Common myeloid progenitor, CD34-positive (primary cell): ENCODE measurements at regions of chr10 and their contacts with region 1.

Region 1: GRCh38 chr10:70461215-70461986 is 17.2 kb upstream of the PALD1 start:
- DNase-seq: peak in 2 of 3 donors; percentile 38 to 49
- H3K4me3 ChIP-seq: no peak overlapping the region
- H3K27ac ChIP-seq: no peak overlapping the region
- H3K4me1 ChIP-seq: peaks cover 0 to 22% (median 13%) of the 10 kb centered on the region in 4 experiments
- H3K27me3 ChIP-seq: peaks cover 2 to 44% (median 20%) of the 10 kb centered on the region in 5 experiments

Region 2: GRCh38 chr10:70255329-70256299 is 205.8 kb before region 1 on chr10:
- CTCF ChIA-PET with region 1: no interaction called
- POLR2A ChIA-PET with region 1: no interaction called
- DNase-seq: peak in 2 of 3 donors; percentile 38 to 47
- H3K4me3 ChIP-seq: peak overlapping the region in 3 of 7 experiments; percentile 28 to 51 (median 43)
- H3K27ac ChIP-seq: no peak overlapping the region
- H3K4me1 ChIP-seq: peaks cover 0 to 14% (median 11%) of the 10 kb centered on the region in 4 experiments
- H3K27me3 ChIP-seq: peaks cover 3 to 68% (median 40%) of the 10 kb centered on the region in 5 experiments

Region 3: GRCh38 chr10:70381471-70382421 is 79.7 kb before region 1 on chr10:
- CTCF ChIA-PET with region 1: no interaction called
- POLR2A ChIA-PET with region 1: no interaction called
- DNase-seq: no peak
- H3K4me3 ChIP-seq: peak overlapping the region; percentile 59 to 82 (median 77)
- H3K27ac ChIP-seq: no peak overlapping the region
- H3K4me1 ChIP-seq: peaks cover 2 to 18% (median 14%) of the 10 kb centered on the region in 4 experiments
- H3K27me3 ChIP-seq: peaks cover 0 to 12% (median 0%) of the 10 kb centered on the region in 5 experiments

Region 4: DNA sequence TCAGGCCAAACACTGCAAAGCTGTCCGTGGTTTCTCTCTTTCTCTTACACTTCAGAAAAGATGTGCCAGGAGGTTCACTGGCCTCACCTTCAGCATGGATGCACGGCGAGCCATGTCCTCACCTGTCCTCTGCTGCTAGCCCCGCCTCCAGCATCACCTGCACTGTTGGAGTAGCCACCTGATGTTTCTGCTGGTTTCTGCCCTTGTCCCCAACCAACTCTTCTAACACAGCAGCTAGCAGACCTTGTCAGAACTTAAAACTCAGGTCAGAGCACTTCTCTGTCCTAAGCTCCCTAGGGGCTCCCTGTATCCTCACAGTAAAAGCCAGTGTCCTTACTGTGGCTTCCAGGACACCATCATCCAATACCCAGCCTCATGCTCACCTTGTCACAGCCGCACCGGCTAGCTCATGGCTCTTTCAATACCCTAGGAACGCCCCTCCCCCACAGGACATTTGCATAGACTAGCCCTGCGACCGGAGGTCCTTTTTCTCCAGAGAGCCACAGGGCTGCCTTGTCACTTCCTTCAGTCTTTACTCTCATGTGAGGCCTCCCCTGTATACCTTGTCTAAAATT is 32.3 kb after region 1 on chr10:
- CTCF ChIA-PET with region 1: interaction called, 17 read pairs
- POLR2A ChIA-PET with region 1: interaction called, 4 read pairs
- DNase-seq: peak in 2 of 3 donors; percentile 51 to 58
- H3K4me3 ChIP-seq: peak overlapping the region in 3 of 7 experiments; percentile 5 to 31 (median 26)
- H3K27ac ChIP-seq: no peak overlapping the region
- H3K4me1 ChIP-seq: peaks cover 16 to 75% (median 41%) of the 10 kb centered on the region in 4 experiments
- H3K27me3 ChIP-seq: no peaks in the 10 kb centered on the region

Region 5: GRCh38 chr10:70508912-70509756 is 47.7 kb after region 1 on chr10:
- CTCF ChIA-PET with region 1: interaction called, 35 read pairs
- POLR2A ChIA-PET with region 1: no interaction called
- DNase-seq: peak; percentile 40 to 95 (median 89)
- H3K4me3 ChIP-seq: peak overlapping the region in 3 of 7 experiments; percentile 20 to 52 (median 51)
- H3K27ac ChIP-seq: no peak overlapping the region
- H3K4me1 ChIP-seq: peaks cover 4 to 47% (median 29%) of the 10 kb centered on the region in 4 experiments
- H3K27me3 ChIP-seq: no peaks in the 10 kb centered on the region

Region 6: GRCh38 chr10:70528726-70529362 is 67.4 kb after region 1 on chr10:
- CTCF ChIA-PET with region 1: interaction called, 61 read pairs
- POLR2A ChIA-PET with region 1: interaction called, 6 read pairs
- DNase-seq: peak; percentile 30 to 54 (median 36)
- H3K4me3 ChIP-seq: no peak overlapping the region
- H3K27ac ChIP-seq: no peak overlapping the region
- H3K4me1 ChIP-seq: peaks cover 0 to 21% (median 10%) of the 10 kb centered on the region in 4 experiments
- H3K27me3 ChIP-seq: no peaks in the 10 kb centered on the region

Region 7: DNA sequence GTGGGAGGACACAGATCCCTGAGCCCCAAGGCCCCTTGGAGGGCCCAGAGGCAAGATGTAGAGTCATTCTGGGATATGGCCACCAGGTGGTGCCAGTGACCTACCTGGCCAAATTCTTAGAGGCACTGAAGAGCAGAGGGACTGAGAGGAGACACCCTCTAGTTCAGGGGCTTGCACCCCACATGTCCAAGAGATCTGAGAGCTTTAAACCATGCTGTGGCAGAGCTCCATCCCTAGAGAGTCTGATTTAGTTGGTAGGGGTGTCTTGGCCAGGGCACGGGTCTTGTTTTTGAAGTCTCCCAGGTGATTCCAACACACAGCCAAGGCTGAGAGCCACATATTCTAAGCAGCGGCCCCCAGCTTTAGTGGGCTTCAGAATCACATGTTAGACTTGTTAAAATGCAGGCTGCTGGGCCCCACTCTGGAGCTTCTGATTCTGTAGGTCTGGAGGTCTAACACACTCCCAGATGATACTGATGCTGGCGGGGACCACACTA is 88.6 kb after region 1 on chr10:
- CTCF ChIA-PET with region 1: interaction called, 10 read pairs
- POLR2A ChIA-PET with region 1: no interaction called
- DNase-seq: peak; percentile 63 to 84 (median 75)
- H3K4me3 ChIP-seq: no peak overlapping the region
- H3K27ac ChIP-seq: no peak overlapping the region
- H3K4me1 ChIP-seq: no peaks in the 10 kb centered on the region
- H3K27me3 ChIP-seq: no peaks in the 10 kb centered on the region